ENCODE measurements at regions of chr9 and their contacts with region 1.

Region 1: GRCh38 chr9:113275157-113276131 is at the starts of genes CDC26 and PRPF4:
- DNase-seq: peak; percentile 98
- H3K4me3 ChIP-seq: peak within 1 kb of the TSS; percentile 74 to 90 (median 80)
- H3K27ac ChIP-seq: peak within 1 kb of the TSS; percentile 91 to 98 (median 94)
- H3K4me1 ChIP-seq: peaks cover 24 to 60% (median 37%) of the 10 kb centered on the region in 6 donors
- H3K27me3 ChIP-seq: no peaks in the 10 kb centered on the region
- CTCF ChIP-seq: peak in 4 of 11 experiments; percentile 12 to 41 (median 26)
- POLR2A ChIP-seq: peak; percentile 71 to 91 (median 88)
- total RNA-seq, gene CDC26: 20.6 to 31.3 (median 27.1) TPM
- total RNA-seq, gene PRPF4: 13.5 to 20.2 (median 17.5) TPM

Region 2: DNA sequence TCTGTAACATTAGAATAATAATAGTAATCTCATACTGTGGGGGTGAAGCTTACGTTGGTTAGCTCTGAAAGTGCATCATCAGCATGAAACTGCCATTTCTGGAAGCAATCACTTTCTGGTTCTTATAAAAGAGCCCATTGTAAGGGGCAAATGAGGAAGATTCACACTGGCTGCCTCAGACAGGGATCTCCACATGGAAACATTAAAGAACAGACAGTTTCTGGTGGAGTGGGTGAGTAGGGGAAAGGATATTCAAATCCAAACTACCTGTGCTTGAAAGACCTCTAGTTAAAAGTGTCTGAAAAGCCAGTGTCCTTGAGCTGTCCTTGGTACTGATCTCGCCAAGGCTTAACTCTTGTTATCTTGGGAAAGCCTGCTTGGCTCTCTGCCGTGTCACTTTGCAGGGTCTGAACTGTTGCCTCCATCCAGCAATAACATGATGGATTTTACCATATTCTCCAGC is 143.7 kb before region 1 on chr9:
- intact Hi-C with region 1: no loop called
- DNase-seq: no peak
- H3K4me3 ChIP-seq: no peak overlapping the region
- H3K27ac ChIP-seq: peak overlapping the region in 2 of 8 donors; percentile 21 to 36
- H3K4me1 ChIP-seq: peaks cover 0 to 7% (median 0%) of the 10 kb centered on the region in 6 donors
- H3K27me3 ChIP-seq: peaks cover 0 to 45% (median 0%) of the 10 kb centered on the region in 7 donors
- CTCF ChIP-seq: no peak
- POLR2A ChIP-seq: no peak

Region 3: GRCh38 chr9:113221003-113221799 is 54.2 kb before region 1 on chr9 and contains the starts of genes FKBP15 and SLC31A1:
- intact Hi-C with region 1: loop called (anchors 10 kb)
- DNase-seq: peak; percentile 98
- H3K4me3 ChIP-seq: peak within 1 kb of the TSS; percentile 63 to 94 (median 83)
- H3K27ac ChIP-seq: peak within 1 kb of the TSS; percentile 72 to 95 (median 89)
- H3K4me1 ChIP-seq: peaks cover 20 to 92% (median 56%) of the 10 kb centered on the region in 6 donors
- H3K27me3 ChIP-seq: no peaks in the 10 kb centered on the region
- CTCF ChIP-seq: peak in 2 of 11 experiments; percentile 14 to 28
- POLR2A ChIP-seq: peak in 1 of 3 donors; percentile 16
- total RNA-seq, gene FKBP15: 50.7 to 68.0 (median 60.0) TPM
- total RNA-seq, gene SLC31A1: 17.7 to 22.7 (median 19.2) TPM

Region 4: DNA sequence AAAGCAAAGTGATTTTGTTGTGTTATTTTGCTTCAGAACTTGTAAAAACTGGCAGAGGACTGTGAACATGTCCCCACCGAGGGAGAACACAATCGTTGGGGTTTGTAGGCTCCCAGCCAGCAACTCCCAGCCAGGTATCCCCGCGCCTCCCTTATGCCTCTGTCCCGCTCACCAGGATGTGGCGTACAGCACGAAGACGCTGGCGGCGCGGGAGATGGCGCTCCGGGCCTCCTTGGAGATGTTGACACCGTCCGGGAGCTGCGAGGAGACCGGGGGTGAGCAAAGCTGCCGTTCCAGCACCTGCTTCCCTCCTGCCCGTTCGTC is 134.4 kb after region 1 on chr9:
- intact Hi-C with region 1: loop called (anchors 5 kb)
- DNase-seq: no peak
- H3K4me3 ChIP-seq: peak overlapping the region; percentile 65 to 95 (median 83)
- H3K27ac ChIP-seq: peak overlapping the region; percentile 95 to 97 (median 96)
- H3K4me1 ChIP-seq: peaks cover 11 to 49% (median 40%) of the 10 kb centered on the region in 6 donors
- H3K27me3 ChIP-seq: no peaks in the 10 kb centered on the region
- CTCF ChIP-seq: no peak
- POLR2A ChIP-seq: no peak

Region 5: DNA sequence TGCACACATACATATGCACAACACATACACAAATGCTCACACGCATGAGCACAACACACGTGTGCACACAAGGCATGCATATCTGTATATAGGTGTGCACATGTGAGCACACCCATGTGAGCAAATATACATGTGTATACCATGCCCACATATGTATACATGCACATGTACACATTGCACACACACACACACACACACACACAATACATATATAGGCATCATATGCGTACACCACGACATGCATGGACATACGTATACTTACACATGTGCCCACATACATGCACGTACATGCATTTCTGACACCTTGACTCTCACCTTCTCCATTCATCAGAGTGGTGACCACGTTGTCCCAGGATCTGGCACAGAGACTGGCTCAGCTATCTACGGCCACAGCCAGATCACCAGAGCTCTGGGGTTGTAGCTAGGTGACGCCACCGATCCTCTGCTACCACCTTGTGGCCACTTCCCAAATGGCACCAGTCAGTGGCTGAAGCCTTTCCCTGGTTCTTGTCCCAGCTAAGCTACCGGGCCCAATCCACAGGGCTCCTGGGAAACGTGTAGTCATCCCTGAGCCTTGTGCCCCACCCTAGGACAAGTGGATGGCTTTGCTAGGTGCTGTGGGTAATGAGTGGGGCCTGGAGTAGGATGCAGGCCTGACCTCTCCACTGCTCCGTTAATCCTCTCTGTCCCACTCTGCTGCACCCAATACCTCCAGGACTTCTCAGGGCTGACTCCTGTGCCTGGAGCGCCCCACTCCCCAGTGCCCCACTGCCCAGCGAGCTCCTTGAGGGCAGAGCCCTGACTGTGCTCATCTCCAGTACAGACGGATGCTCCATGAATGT is 382.5 kb after region 1 on chr9:
- intact Hi-C with region 1: loop called (anchors 10 kb)
- DNase-seq: peak; percentile 92
- H3K4me3 ChIP-seq: no peak overlapping the region
- H3K27ac ChIP-seq: no peak overlapping the region
- H3K4me1 ChIP-seq: peaks cover 10 to 47% (median 32%) of the 10 kb centered on the region in 6 donors
- H3K27me3 ChIP-seq: peaks cover 0 to 24% (median 0%) of the 10 kb centered on the region in 7 donors
- CTCF ChIP-seq: peak; percentile 92 to 97 (median 95)
- POLR2A ChIP-seq: no peak

Measured in spleen (tissue), 13 donors.